ENCODE measurements at regions of chr7 and their contacts with region 1.

Region 1: GRCh38 chr7:129091484-129092002 is 36.6 kb upstream of the TNPO3 start:
- DNase-seq: peak; percentile 62
- ATAC-seq: peak; percentile 87
- H3K4me3 ChIP-seq: no peak overlapping the region
- H3K27ac ChIP-seq: peak overlapping the region; percentile 48
- H3K4me1 ChIP-seq: peaks cover 40% of the 10 kb centered on the region
- H3K27me3 ChIP-seq: no peaks in the 10 kb centered on the region
- CTCF ChIP-seq: peak; percentile 98 to 99 (median 98); a peak in 5 of 6 replicates
- EP300 ChIP-seq: no peak
- POLR2A ChIP-seq: no peak
- RAD21 ChIP-seq: peak; percentile 99

Region 2: DNA sequence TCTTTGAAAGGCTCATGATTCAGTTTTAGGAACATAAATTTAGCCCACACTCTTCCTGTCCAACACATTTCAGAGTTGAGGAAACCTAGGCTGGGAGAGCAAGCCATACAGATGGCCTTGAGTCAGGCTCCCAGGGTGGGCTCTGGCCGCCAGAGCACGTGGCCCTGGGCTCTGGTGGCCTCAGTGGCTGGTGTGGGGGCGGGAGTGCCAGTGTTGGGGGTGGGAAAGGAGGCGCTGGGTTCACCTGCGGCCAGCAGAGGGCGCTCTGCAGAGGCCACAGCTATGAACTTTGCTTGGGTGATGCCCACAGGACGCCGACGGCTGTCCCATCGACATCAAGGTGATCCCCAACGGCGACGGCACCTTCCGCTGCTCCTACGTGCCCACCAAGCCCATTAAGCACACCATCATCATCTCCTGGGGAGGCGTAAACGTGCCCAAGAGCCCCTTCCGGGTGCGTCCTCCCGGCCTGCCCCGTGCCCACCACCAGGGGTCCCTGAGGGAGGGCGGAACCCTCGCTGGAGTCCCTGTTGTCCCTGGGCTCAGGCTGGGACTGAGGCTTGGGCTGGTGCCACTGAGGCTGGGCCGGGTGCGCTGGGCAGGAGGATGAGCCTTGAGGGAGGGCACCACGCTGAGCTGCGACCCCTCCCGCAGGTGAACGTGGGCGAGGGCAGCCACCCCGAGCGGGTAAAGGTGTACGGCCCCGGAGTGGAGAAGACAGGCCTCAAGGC is 249.5 kb before region 1 on chr7:
- CTCF ChIA-PET with region 1: interaction called, 7 read pairs
- POLR2A ChIA-PET with region 1: no interaction called
- RAD21 ChIA-PET with region 1: interaction called, 4 read pairs
- SMC1A ChIA-PET with region 1: no interaction called
- in situ Hi-C with region 1: no loop called
- intact Hi-C with region 1: loop called (anchors 1 kb)
- DNase-seq: no peak
- ATAC-seq: peak; percentile 81
- H3K4me3 ChIP-seq: no peak overlapping the region
- H3K27ac ChIP-seq: no peak overlapping the region
- H3K4me1 ChIP-seq: no peaks in the 10 kb centered on the region; the same call in 1 of the 2 replicates
- H3K27me3 ChIP-seq: no peaks in the 10 kb centered on the region; a peak in 1 of 4 replicates
- CTCF ChIP-seq: peak; percentile 49 to 85 (median 52); a peak in 5 of 6 replicates
- EP300 ChIP-seq: no peak
- POLR2A ChIP-seq: no peak
- RAD21 ChIP-seq: no peak

Region 3: DNA sequence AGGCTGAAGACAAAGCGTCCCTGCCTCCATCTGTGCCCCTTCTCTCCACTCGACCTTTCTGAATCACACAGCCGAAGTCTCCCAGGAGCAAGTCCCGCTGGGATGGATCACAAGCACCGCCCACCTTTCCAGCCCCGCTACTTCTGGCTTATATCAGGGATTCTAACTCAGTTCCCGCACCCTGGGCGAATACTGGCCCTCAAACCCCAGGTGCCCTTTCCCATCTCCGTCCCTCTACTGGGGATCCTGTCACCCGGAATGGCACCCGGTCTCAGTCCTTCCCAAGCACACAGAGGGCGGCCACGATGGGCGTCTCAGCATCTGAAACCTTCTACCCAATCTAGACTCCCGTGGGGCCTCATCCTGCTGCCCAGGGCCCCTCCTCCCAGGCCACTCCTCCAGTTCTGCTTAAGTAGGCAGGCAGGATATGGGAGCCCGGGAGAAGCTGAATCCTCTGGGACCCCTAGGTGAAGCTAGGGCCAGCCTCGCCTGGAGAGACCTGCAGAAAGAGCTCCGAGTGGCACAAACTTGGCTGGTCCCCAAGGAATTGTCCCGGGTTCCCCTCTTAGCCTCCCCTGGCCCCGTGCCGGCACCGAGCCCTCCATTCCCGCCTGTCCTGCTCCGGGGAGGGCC is 181.8 kb before region 1 on chr7:
- CTCF ChIA-PET with region 1: interaction called, 41 read pairs
- POLR2A ChIA-PET with region 1: interaction called, 5 read pairs
- RAD21 ChIA-PET with region 1: interaction called, 12 read pairs
- SMC1A ChIA-PET with region 1: interaction called, 8 read pairs
- in situ Hi-C with region 1: loop called (anchors 5 kb)
- intact Hi-C with region 1: loop called (anchors 1 kb)
- DNase-seq: no peak
- ATAC-seq: no peak
- H3K4me3 ChIP-seq: no peak overlapping the region
- H3K27ac ChIP-seq: no peak overlapping the region
- H3K4me1 ChIP-seq: peaks cover 14% of the 10 kb centered on the region
- H3K27me3 ChIP-seq: no peaks in the 10 kb centered on the region
- CTCF ChIP-seq: no peak
- EP300 ChIP-seq: no peak
- POLR2A ChIP-seq: no peak
- RAD21 ChIP-seq: no peak

Region 4: DNA sequence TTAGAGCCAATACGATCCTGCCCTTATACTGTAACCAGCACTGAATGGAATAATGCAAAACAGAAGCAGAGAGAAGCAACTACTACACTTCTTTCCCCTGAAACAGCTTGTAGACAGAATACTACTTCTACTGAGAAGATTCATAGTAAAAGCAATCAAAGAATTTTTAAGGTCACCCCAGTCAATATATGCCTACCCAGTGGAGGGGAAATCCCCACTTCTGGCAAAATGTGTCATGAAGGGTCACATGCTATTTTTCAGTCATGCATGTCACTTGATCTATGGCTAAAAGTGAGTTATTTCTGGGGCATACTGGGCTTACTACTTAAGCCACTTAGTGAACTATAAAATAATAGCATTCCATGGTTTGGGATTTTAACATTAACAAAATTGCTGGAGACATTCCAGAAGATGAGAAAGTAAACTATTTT is 128.2 kb before region 1 on chr7:
- CTCF ChIA-PET with region 1: interaction called, 20 read pairs
- POLR2A ChIA-PET with region 1: no interaction called
- RAD21 ChIA-PET with region 1: interaction called, 10 read pairs
- SMC1A ChIA-PET with region 1: interaction called, 22 read pairs
- in situ Hi-C with region 1: no loop called
- intact Hi-C with region 1: loop called (anchors 5 kb)
- DNase-seq: peak; percentile 79
- ATAC-seq: peak; percentile 98
- H3K4me3 ChIP-seq: no peak overlapping the region; the same call in 1 of the 2 replicates
- H3K27ac ChIP-seq: peak overlapping the region; percentile 75
- H3K4me1 ChIP-seq: peaks cover 18% of the 10 kb centered on the region
- H3K27me3 ChIP-seq: no peaks in the 10 kb centered on the region
- CTCF ChIP-seq: no peak
- EP300 ChIP-seq: peak; percentile 65 to 75; a peak in 3 of 4 replicates
- POLR2A ChIP-seq: no peak
- RAD21 ChIP-seq: no peak

Region 5: GRCh38 chr7:129017933-129018538 is 73.5 kb before region 1 on chr7:
- CTCF ChIA-PET with region 1: interaction called, 6 read pairs
- POLR2A ChIA-PET with region 1: interaction called, 5 read pairs
- RAD21 ChIA-PET with region 1: interaction called, 11 read pairs
- SMC1A ChIA-PET with region 1: interaction called, 29 read pairs
- in situ Hi-C with region 1: no loop called
- intact Hi-C with region 1: loop called (anchors 2 kb)
- DNase-seq: peak; percentile 64
- ATAC-seq: peak; percentile 94
- H3K4me3 ChIP-seq: no peak overlapping the region; the same call in 1 of the 2 replicates
- H3K27ac ChIP-seq: peak overlapping the region; percentile 93
- H3K4me1 ChIP-seq: peaks cover 42% of the 10 kb centered on the region
- H3K27me3 ChIP-seq: no peaks in the 10 kb centered on the region
- CTCF ChIP-seq: no peak
- EP300 ChIP-seq: no peak
- POLR2A ChIP-seq: no peak
- RAD21 ChIP-seq: no peak

Region 6: DNA sequence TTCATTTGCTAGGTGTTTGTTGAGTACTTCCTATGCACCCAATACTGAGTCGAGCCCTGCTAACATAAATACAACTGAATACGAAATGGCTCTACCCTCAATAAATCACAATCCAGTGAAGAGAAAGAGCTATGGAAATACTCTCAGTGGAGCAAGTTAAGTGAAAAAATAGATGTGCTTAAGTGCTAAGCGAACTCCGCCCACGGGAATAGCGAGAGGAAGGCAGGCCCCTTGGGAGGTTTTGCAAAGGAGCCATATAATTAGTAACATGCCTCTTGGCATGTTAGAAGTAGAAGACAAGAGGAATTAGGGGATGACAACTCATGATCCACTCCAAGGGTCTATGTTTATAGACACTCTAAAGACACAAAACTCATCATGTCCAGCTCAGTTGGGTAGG is 10.2 kb after region 1 on chr7:
- CTCF ChIA-PET with region 1: interaction called, 34 read pairs
- POLR2A ChIA-PET with region 1: no interaction called
- RAD21 ChIA-PET with region 1: interaction called, 31 read pairs
- SMC1A ChIA-PET with region 1: interaction called, 18 read pairs
- in situ Hi-C with region 1: no loop called
- intact Hi-C with region 1: no loop called
- DNase-seq: no peak
- ATAC-seq: no peak; the same call in 2 of the 3 replicates
- H3K4me3 ChIP-seq: no peak overlapping the region
- H3K27ac ChIP-seq: no peak overlapping the region
- H3K4me1 ChIP-seq: peaks cover 21% of the 10 kb centered on the region
- H3K27me3 ChIP-seq: no peaks in the 10 kb centered on the region
- CTCF ChIP-seq: no peak
- EP300 ChIP-seq: no peak
- POLR2A ChIP-seq: no peak
- RAD21 ChIP-seq: no peak

Region 7: GRCh38 chr7:129169171-129169671 is 77.7 kb after region 1 on chr7:
- CTCF ChIA-PET with region 1: interaction called, 28 read pairs
- POLR2A ChIA-PET with region 1: no interaction called
- RAD21 ChIA-PET with region 1: interaction called, 13 read pairs
- SMC1A ChIA-PET with region 1: interaction called, 20 read pairs
- in situ Hi-C with region 1: no loop called
- intact Hi-C with region 1: loop called (anchors 1 kb)
- DNase-seq: no peak
- ATAC-seq: peak; percentile 78
- H3K4me3 ChIP-seq: peak overlapping the region; percentile 52
- H3K27ac ChIP-seq: peak overlapping the region; percentile 77
- H3K4me1 ChIP-seq: peaks cover 33% of the 10 kb centered on the region
- H3K27me3 ChIP-seq: no peaks in the 10 kb centered on the region
- CTCF ChIP-seq: no peak
- EP300 ChIP-seq: no peak
- POLR2A ChIP-seq: peak; percentile 80
- RAD21 ChIP-seq: no peak

Region 8: DNA sequence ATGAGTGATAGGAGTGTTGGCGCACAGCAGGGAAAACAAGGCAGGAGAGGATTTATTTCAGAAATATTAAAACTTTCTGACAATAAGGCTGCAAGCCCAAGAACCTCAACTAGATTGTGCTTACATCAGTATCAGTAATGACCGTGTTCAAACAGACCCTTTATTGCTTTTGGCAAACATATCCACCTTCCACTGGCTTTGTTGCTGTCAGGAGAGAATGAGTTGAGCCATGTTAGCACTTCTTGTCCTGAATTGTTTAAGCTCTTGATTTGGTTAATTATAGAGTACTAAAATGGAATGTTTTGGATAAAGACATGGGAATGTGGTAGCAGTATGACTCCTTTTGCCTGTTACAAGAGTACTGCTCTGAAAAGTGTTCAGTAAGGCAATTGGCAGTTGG is 137.1 kb after region 1 on chr7:
- CTCF ChIA-PET with region 1: no interaction called
- POLR2A ChIA-PET with region 1: no interaction called
- RAD21 ChIA-PET with region 1: no interaction called
- SMC1A ChIA-PET with region 1: no interaction called
- in situ Hi-C with region 1: no loop called
- intact Hi-C with region 1: no loop called
- DNase-seq: no peak
- ATAC-seq: no peak
- H3K4me3 ChIP-seq: no peak overlapping the region
- H3K27ac ChIP-seq: no peak overlapping the region
- H3K4me1 ChIP-seq: peaks cover 8% of the 10 kb centered on the region; the same call in 1 of the 2 replicates
- H3K27me3 ChIP-seq: no peaks in the 10 kb centered on the region
- CTCF ChIP-seq: no peak
- EP300 ChIP-seq: no peak
- POLR2A ChIP-seq: no peak
- RAD21 ChIP-seq: no peak

Region 9: DNA sequence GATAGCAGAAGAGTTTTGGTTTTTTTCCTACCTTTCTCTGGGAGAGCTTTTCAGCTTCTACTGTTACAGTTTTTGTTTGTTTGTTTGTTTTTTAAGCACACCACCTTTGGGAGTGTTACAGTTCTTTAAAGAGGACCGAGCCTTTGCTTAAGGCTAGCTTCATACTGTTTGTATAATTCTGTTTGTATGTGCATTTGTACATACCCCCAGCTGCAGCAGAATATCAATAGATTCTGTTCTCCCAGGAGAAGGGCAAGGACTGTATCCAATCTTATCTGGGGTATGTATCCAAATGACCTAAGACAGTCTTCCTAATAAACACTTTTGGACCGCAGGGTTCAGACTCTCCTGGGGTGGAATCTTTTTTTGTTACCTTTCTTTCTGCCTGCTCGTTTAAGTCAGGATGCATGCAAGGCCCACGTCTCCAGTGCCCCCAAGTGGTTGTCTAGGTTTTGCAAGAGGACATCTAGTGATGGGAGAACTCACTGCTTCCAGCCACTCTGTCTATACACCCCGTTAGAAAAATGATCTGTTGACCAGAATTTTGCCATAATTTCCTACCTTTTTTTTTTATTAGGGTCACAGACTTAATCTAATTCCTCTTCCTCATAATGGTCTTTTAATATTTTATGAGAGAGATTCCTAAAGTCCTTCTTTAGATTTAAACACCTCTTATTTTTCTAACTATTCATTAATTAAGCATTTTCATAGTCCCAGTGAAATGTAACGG is 543.9 kb after region 1 on chr7:
- CTCF ChIA-PET with region 1: no interaction called
- POLR2A ChIA-PET with region 1: no interaction called
- RAD21 ChIA-PET with region 1: no interaction called
- SMC1A ChIA-PET with region 1: no interaction called
- in situ Hi-C with region 1: no loop called
- intact Hi-C with region 1: no loop called
- DNase-seq: peak; percentile 47
- ATAC-seq: peak; percentile 100
- H3K4me3 ChIP-seq: no peak overlapping the region
- H3K27ac ChIP-seq: no peak overlapping the region
- H3K4me1 ChIP-seq: peaks cover 7% of the 10 kb centered on the region
- H3K27me3 ChIP-seq: no peaks in the 10 kb centered on the region
- CTCF ChIP-seq: peak; percentile 85 to 89 (median 89)
- EP300 ChIP-seq: no peak
- POLR2A ChIP-seq: no peak
- RAD21 ChIP-seq: peak; percentile 85